ENCODE measurements at regions of chr5 and their contacts with region 1.

Region 1: GRCh38 chr5:171137768-171138525 is 171.1 kb upstream of the TLX3 start:
- DNase-seq: no peak
- H3K4me3 ChIP-seq: no peak overlapping the region
- H3K27ac ChIP-seq: no peak overlapping the region
- H3K4me1 ChIP-seq: no peaks in the 10 kb centered on the region
- H3K27me3 ChIP-seq: no peaks in the 10 kb centered on the region
- CTCF ChIP-seq: no peak
- POLR2A ChIP-seq: no peak

Region 2: DNA sequence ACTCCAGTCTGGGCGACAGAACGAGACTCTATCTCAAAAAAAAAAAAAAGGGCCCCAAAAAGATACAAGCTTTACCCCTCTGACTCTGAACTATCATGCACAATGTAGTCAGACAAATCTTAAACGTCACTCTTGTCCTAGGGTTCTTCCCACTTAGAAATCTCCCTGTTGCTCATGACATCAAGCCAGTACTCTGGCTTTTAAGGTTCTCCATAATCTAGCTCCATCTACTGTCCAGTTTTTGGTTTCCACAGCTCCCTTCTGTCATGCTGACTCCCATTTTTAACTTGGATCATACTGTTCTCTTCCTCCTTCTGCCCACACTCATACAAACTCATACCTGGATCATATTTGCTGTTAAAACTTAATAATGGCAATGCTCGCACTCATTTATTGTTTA is 14.4 kb after region 1 on chr5:
- intact Hi-C with region 1: loop called (anchors 1 kb)
- DNase-seq: no peak
- H3K4me3 ChIP-seq: no peak overlapping the region
- H3K27ac ChIP-seq: no peak overlapping the region
- H3K4me1 ChIP-seq: no peaks in the 10 kb centered on the region
- H3K27me3 ChIP-seq: no peaks in the 10 kb centered on the region
- CTCF ChIP-seq: no peak
- POLR2A ChIP-seq: no peak

Measured in breast epithelium (tissue), 4 donors.